Activated CD8-positive, alpha-beta T cell treated with anti-CD3 and anti-CD28 coated beads for 36 hours (primary cell): ENCODE measurements at regions of chr6 and their contacts with region 1.

Region 1: GRCh38 chr6:53956068-53956711 is 155.1 kb upstream of the MLIP start:
- DNase-seq: peak; percentile 42
- ATAC-seq: peak; percentile 58
- H3K4me3 Mint-ChIP-seq: no peak overlapping the region
- H3K27ac Mint-ChIP-seq: no peak overlapping the region
- H3K4me1 Mint-ChIP-seq: no peaks in the 10 kb centered on the region
- H3K27me3 Mint-ChIP-seq: peaks cover 3% of the 10 kb centered on the region
- CTCF ChIP-seq: peak; percentile 40

Region 2: GRCh38 chr6:53794720-53795253 is 161.4 kb before region 1 on chr6 and contains the start of gene LRRC1:
- CTCF ChIA-PET with region 1: interaction called, 6 read pairs
- POLR2A ChIA-PET with region 1: no interaction called
- intact Hi-C with region 1: loop called (anchors 10 kb)
- DNase-seq: peak; percentile 85
- ATAC-seq: peak; percentile 79
- H3K4me3 Mint-ChIP-seq: peak within 1 kb of the TSS; percentile 97
- H3K27ac Mint-ChIP-seq: peak within 1 kb of the TSS; percentile 91
- H3K4me1 Mint-ChIP-seq: peaks cover 14% of the 10 kb centered on the region
- H3K27me3 Mint-ChIP-seq: peaks cover 25% of the 10 kb centered on the region
- CTCF ChIP-seq: no peak
- total RNA-seq, gene LRRC1: 1.9 to 2.5 TPM